ENCODE measurements at regions of chr19 and their contacts with region 1.

Region 1: DNA sequence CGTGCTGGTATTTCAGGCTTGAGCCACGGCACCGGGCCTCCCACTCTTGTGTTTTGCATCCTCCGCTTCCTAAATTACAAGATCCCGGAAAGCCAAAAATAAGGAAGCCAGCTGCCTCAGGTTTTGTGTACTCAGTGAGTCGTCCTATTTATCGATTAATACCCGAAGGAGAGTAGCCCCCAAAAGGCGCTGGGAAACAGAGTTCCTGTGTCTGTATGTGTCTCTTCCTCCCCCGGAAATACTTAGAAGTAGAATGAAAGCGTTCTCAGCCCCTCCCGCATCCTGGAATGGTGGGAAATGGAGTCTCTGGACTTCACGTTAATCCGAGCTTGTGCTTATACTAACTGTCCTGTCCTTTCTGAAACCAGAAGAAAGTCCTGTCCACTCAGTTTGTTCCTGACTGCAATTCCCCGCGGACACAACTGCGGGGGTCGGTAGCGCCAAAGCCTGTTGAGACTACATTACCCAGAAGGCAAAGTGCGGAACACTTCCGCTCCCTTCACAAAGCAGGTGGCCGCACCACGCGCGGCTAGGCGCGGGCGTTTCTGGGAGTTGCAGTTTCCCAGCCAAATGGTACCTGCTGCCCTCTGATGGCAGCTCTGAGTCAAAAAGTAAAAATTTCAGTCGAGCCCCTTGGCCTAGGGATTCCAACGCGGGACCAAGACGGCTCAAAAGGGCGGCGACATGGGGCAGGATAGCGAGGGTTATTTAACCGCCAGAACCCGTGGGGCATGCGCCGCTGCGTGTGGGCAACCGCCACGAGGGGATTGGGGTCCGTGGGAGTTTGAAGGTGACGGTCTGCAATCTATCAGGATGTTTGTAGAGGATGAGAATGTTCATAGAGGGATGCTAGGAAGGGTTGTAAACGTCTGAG is 2.2 kb upstream of the GSK3A start:
- DNase-seq: peak; percentile 90 to 94 (median 90)
- H3K4me3 ChIP-seq: peak overlapping the region; percentile 79 to 96 (median 84)
- H3K4me3 Mint-ChIP-seq: peak overlapping the region; percentile 95 to 99
- H3K27ac ChIP-seq: peak overlapping the region; percentile 61 to 76
- H3K27ac Mint-ChIP-seq: peak overlapping the region; percentile 96 to 98 (median 97)
- H3K4me1 ChIP-seq: peaks cover 37 to 44% of the 10 kb centered on the region in 2 donors
- H3K4me1 Mint-ChIP-seq: peaks cover 48% of the 10 kb centered on the region
- H3K27me3 ChIP-seq: no peaks in the 10 kb centered on the region
- H3K27me3 Mint-ChIP-seq: peaks cover 0 to 4% (median 3%) of the 10 kb centered on the region in 3 donors
- CTCF ChIP-seq: peak; percentile 68

Region 2: GRCh38 chr19:41912899-41913537 is 331.6 kb before region 1 on chr19:
- intact Hi-C with region 1: no loop called
- DNase-seq: no peak
- H3K4me3 ChIP-seq: no peak overlapping the region
- H3K4me3 Mint-ChIP-seq: peak overlapping the region in 1 of 2 donors; percentile 26
- H3K27ac ChIP-seq: no peak overlapping the region
- H3K27ac Mint-ChIP-seq: peak overlapping the region in 1 of 7 donors; percentile 58
- H3K4me1 ChIP-seq: no peaks in the 10 kb centered on the region
- H3K4me1 Mint-ChIP-seq: peaks cover 18% of the 10 kb centered on the region
- H3K27me3 ChIP-seq: peaks cover 29 to 67% of the 10 kb centered on the region in 2 donors
- H3K27me3 Mint-ChIP-seq: peaks cover 4 to 44% (median 43%) of the 10 kb centered on the region in 3 donors
- CTCF ChIP-seq: no peak

Region 3: DNA sequence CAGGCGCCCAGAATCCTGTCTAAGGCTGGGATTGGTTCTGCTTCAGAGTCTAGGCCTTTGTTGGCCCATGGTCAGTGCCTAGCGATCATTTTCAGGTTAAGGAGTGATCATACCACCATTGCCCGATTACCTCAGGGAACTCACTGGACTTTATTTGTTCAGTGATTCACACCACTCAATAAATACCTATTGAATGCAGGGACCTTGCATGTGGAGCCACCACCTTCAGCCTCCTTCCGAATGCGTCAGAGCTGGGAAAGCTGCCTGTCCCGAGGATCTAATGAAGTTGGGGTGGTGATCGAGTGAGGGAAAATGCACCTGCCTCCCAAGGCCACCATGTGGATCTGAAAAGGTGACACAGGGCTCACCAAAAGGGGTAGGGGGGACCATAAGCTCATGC is 72.3 kb before region 1 on chr19:
- intact Hi-C with region 1: no loop called
- DNase-seq: no peak
- H3K4me3 ChIP-seq: no peak overlapping the region
- H3K4me3 Mint-ChIP-seq: no peak overlapping the region
- H3K27ac ChIP-seq: no peak overlapping the region
- H3K27ac Mint-ChIP-seq: no peak overlapping the region
- H3K4me1 ChIP-seq: peaks cover 10 to 21% of the 10 kb centered on the region in 2 donors
- H3K4me1 Mint-ChIP-seq: peaks cover 17% of the 10 kb centered on the region
- H3K27me3 ChIP-seq: peaks cover 15 to 23% of the 10 kb centered on the region in 2 donors
- H3K27me3 Mint-ChIP-seq: peaks cover 29 to 33% (median 32%) of the 10 kb centered on the region in 3 donors
- CTCF ChIP-seq: no peak

Region 4: GRCh38 chr19:42184401-42184861 is 60.2 kb before region 1 on chr19:
- intact Hi-C with region 1: loop called in 1 of 2 experiments (anchors 5 kb)
- DNase-seq: peak; percentile 59 to 73 (median 72)
- H3K4me3 ChIP-seq: peak overlapping the region in 1 of 3 experiments; percentile 53
- H3K4me3 Mint-ChIP-seq: peak overlapping the region; percentile 3 to 65
- H3K27ac ChIP-seq: peak overlapping the region in 1 of 2 donors; percentile 62
- H3K27ac Mint-ChIP-seq: peak overlapping the region; percentile 71 to 91 (median 83)
- H3K4me1 ChIP-seq: peaks cover 52 to 61% of the 10 kb centered on the region in 2 donors
- H3K4me1 Mint-ChIP-seq: peaks cover 62% of the 10 kb centered on the region
- H3K27me3 ChIP-seq: peaks cover 11 to 14% of the 10 kb centered on the region in 2 donors
- H3K27me3 Mint-ChIP-seq: peaks cover 5 to 12% (median 9%) of the 10 kb centered on the region in 3 donors
- CTCF ChIP-seq: peak; percentile 96

Region 5: DNA sequence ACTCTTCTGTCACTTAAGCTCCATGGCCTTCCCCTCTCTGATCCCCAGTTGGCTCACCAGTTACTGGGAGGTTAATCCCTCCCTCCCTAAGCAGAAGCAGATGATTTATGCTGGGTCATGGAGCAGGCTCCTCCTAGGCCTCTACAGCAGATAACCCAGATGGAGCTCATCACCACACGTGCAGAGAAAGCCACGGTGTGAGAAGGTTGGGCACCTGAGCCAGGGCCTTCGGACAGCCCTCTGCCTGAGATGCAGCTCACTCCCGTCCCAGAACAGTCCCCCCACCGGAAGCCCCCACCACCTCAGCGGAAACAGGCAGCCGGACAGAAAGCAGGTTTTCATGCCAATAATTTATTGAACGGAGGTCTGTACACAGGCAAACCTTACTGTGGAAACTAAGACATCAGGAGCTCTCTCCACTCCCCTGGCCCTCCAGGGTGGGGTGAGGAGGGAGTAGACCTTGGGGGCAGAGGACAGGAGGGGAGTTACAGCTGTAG is 14.7 kb before region 1 on chr19:
- intact Hi-C with region 1: no loop called
- DNase-seq: no peak
- H3K4me3 ChIP-seq: no peak overlapping the region
- H3K4me3 Mint-ChIP-seq: no peak overlapping the region
- H3K27ac ChIP-seq: peak overlapping the region in 1 of 2 donors; percentile 37
- H3K27ac Mint-ChIP-seq: peak overlapping the region in 4 of 7 donors; percentile 52 to 72 (median 70)
- H3K4me1 ChIP-seq: no peaks in the 10 kb centered on the region
- H3K4me1 Mint-ChIP-seq: peaks cover 10% of the 10 kb centered on the region
- H3K27me3 ChIP-seq: no peaks in the 10 kb centered on the region
- H3K27me3 Mint-ChIP-seq: no peaks in the 10 kb centered on the region
- CTCF ChIP-seq: no peak

Region 6: GRCh38 chr19:42268704-42269477 is 24.3 kb after region 1 on chr19 and contains the start of gene CIC:
- intact Hi-C with region 1: loop called in 1 of 2 experiments (anchors 1 kb)
- DNase-seq: peak; percentile 100
- H3K4me3 ChIP-seq: peak within 1 kb of the TSS; percentile 73 to 88 (median 76)
- H3K4me3 Mint-ChIP-seq: peak within 1 kb of the TSS; percentile 84 to 95
- H3K27ac ChIP-seq: peak within 1 kb of the TSS; percentile 90 to 99
- H3K27ac Mint-ChIP-seq: peak within 1 kb of the TSS in 4 of 7 donors; percentile 98 to 99 (median 99)
- H3K4me1 ChIP-seq: peaks cover 30 to 35% of the 10 kb centered on the region in 2 donors
- H3K4me1 Mint-ChIP-seq: peaks cover 29% of the 10 kb centered on the region
- H3K27me3 ChIP-seq: no peaks in the 10 kb centered on the region
- H3K27me3 Mint-ChIP-seq: peaks cover 0 to 1% (median 1%) of the 10 kb centered on the region in 3 donors
- CTCF ChIP-seq: no peak
- polyA plus RNA-seq, gene CIC: 0.62 to 42.2 (median 0.87) TPM

Measured in CD14-positive monocyte (primary cell).